Naive thymus-derived CD8-positive, alpha-beta T cell (primary cell): ENCODE measurements at regions of chr17 and their contacts with region 1.

Region 1: DNA sequence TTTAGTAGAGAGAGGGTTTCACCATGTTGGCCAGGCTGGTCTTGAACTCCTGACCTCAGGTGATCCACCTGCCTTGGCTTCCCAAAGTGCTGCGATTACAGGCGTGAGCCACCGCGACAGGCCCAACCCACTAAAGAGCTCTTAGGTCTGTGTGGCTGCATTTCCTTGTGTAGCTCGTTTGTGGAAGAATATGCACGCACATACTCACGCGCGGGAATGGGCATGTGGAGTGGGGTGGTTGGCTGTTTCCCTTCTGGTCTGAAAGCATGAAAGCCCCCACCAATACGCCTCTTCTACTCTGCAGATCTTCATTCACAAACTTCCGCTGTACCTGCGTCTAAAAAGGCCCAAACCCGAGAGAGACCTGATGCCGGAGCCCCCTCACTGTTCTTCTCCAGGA is 10.1 kb downstream of the CHRNB1 start:
- DNase-seq: no peak
- ATAC-seq: peak in 1 of 2 donors; percentile 55
- H3K4me3 Mint-ChIP-seq: peak overlapping the region; percentile 87 to 99 (median 96)
- H3K27ac Mint-ChIP-seq: peak overlapping the region; percentile 86 to 98 (median 92)
- H3K4me1 Mint-ChIP-seq: peaks cover 19 to 45% (median 23%) of the 10 kb centered on the region in 4 donors
- H3K27me3 Mint-ChIP-seq: no peaks in the 10 kb centered on the region

Region 2: DNA sequence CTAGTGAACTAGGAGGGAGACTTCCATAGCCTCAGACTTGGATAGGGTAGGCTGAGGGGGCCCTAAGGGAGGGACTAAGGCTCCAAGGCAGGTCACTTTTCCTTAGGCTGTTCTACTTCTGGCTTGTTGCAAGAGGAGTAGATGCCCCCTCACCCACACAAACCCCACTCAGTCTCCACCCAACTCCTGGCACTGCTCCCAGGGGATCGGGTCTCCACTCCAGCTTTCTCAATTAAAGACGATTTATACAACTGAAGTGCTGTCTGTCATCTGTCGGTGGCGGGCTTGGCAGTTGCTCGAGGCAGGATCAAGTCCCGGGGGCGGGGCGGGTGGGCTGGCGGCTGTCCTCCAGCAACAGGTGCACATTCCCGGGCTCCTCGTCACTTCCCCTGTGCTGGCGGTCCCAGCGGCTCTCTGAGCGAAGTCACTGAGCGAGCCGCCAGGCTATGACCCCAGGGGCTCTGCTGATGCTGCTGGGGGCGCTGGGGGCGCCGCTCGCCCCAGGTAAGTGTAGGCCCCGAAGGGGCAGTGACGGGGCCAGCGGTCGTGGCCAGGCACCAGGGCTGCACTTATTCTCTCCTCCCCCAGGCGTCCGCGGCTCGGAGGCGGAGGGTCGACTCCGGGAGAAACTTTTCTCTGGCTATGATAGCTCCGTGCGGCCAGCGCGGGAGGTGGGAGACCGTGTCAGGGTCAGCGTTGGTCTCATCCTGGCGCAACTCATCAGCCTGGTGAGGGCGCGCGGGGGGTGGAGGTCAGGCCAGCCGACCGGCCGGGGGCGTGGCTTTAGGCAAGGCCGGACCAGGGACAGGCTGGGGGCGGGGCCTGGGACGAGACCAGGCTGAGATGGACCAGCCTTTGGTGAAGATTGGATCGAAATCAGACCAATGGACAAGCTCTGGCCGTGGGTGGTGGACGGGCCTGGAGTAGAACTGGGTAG is 10.0 kb before region 1 on chr17 and contains the start of gene CHRNB1:
- POLR2A ChIA-PET with region 1: interaction called, 133 read pairs
- DNase-seq: peak in 2 of 10 donors; percentile 23 to 24
- ATAC-seq: peak; percentile 32 to 38
- H3K4me3 Mint-ChIP-seq: peak within 1 kb of the TSS; percentile 75 to 94 (median 86)
- H3K27ac Mint-ChIP-seq: peak within 1 kb of the TSS in 8 of 10 donors; percentile 7 to 91 (median 62)
- H3K4me1 Mint-ChIP-seq: peaks cover 19 to 33% (median 28%) of the 10 kb centered on the region in 4 donors
- H3K27me3 Mint-ChIP-seq: peaks cover 17 to 71% (median 40%) of the 10 kb centered on the region in 5 donors
- polyA plus RNA-seq, gene CHRNB1: 18.1 to 24.5 (median 24.3) TPM

Region 3: GRCh38 chr17:7496470-7497183 is 41.6 kb after region 1 on chr17:
- POLR2A ChIA-PET with region 1: no interaction called
- DNase-seq: no peak
- ATAC-seq: no peak
- H3K4me3 Mint-ChIP-seq: peak overlapping the region in 2 of 10 donors; percentile 10 to 39
- H3K27ac Mint-ChIP-seq: peak overlapping the region in 3 of 10 donors; percentile 44 to 70 (median 65)
- H3K4me1 Mint-ChIP-seq: peaks cover 21 to 33% (median 26%) of the 10 kb centered on the region in 4 donors
- H3K27me3 Mint-ChIP-seq: no peaks in the 10 kb centered on the region

Region 4: DNA sequence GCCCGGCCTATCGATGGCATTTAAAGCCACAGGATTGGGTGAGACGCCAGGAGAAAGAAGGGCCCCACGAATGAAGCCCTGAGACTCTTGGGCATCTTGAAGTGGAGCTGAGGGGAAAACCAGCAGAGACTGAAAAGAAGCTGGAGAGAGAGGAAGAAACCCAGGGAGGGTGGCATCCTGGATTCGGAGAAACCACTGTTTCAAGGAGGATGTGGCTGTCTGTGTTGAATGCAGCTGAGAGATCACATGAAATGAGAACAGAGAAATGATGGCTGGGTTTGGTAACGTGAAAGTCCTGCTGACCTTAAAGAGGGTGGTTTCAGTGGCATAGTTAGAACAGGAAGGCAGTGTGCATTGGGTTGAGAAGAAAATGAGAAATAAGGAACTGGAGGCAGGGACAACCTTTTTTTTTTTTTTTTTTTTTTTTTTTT is 97.7 kb after region 1 on chr17:
- POLR2A ChIA-PET with region 1: no interaction called
- DNase-seq: peak in 6 of 10 donors; percentile 37 to 75 (median 42)
- ATAC-seq: peak; percentile 47 to 71
- H3K4me3 Mint-ChIP-seq: peak overlapping the region; percentile 42 to 88 (median 75)
- H3K27ac Mint-ChIP-seq: peak overlapping the region; percentile 78 to 97 (median 90)
- H3K4me1 Mint-ChIP-seq: peaks cover 39 to 78% (median 72%) of the 10 kb centered on the region in 4 donors
- H3K27me3 Mint-ChIP-seq: no peaks in the 10 kb centered on the region